Heart right ventricle (tissue), 16 donors: ENCODE measurements at regions of chr1 and their contacts with region 1.

Region 1: GRCh38 chr1:48817505-48818114 is 40.9 kb upstream of the BEND5 start:
- DNase-seq: peak; percentile 43 to 46
- ATAC-seq: peak in 6 of 8 donors; percentile 42 to 79 (median 62)
- H3K4me3 ChIP-seq: no peak overlapping the region
- H3K27ac ChIP-seq: no peak overlapping the region
- H3K4me1 ChIP-seq: no peaks in the 10 kb centered on the region
- H3K27me3 ChIP-seq: no peaks in the 10 kb centered on the region
- CTCF ChIP-seq: peak; percentile 27 to 82 (median 71)

Region 2: DNA sequence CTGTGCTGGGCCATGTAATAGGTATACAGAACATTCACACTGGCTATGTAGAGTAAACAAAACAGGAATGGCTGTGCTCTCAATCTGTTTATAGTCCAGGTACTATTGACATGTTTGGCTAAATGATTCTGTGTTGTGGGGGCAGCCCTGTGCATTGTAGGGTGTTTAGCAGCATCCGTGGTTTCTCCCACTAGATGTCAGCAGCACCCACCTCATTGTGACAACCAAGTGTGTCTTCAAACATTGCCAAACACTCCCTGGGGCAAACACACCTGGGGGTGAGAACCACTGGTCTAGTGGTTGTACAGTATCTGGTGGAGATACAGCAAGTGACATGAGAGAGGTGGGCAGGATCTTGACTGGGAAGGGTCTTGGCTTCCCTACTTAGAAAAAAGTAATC is 265.2 kb before region 1 on chr1:
- intact Hi-C with region 1: loop called in 1 of 10 experiments (anchors 10 kb)
- DNase-seq: no peak
- ATAC-seq: peak in 4 of 8 donors; percentile 30 to 44 (median 40)
- H3K4me3 ChIP-seq: no peak overlapping the region
- H3K27ac ChIP-seq: no peak overlapping the region
- H3K4me1 ChIP-seq: peaks cover 0 to 6% (median 0%) of the 10 kb centered on the region in 9 donors
- H3K27me3 ChIP-seq: no peaks in the 10 kb centered on the region
- CTCF ChIP-seq: peak in 6 of 9 donors; percentile 15 to 40 (median 32)

Region 3: GRCh38 chr1:48572646-48573261 is 244.9 kb before region 1 on chr1:
- intact Hi-C with region 1: loop called in 4 of 10 experiments (anchors 5 to 10 kb)
- DNase-seq: peak; percentile 14 to 28
- ATAC-seq: peak; percentile 33 to 83 (median 73)
- H3K4me3 ChIP-seq: no peak overlapping the region
- H3K27ac ChIP-seq: no peak overlapping the region
- H3K4me1 ChIP-seq: peaks cover 0 to 3% (median 0%) of the 10 kb centered on the region in 9 donors
- H3K27me3 ChIP-seq: peaks cover 0 to 18% (median 12%) of the 10 kb centered on the region in 7 donors
- CTCF ChIP-seq: peak in 8 of 9 donors; percentile 32 to 73 (median 59)

Region 4: DNA sequence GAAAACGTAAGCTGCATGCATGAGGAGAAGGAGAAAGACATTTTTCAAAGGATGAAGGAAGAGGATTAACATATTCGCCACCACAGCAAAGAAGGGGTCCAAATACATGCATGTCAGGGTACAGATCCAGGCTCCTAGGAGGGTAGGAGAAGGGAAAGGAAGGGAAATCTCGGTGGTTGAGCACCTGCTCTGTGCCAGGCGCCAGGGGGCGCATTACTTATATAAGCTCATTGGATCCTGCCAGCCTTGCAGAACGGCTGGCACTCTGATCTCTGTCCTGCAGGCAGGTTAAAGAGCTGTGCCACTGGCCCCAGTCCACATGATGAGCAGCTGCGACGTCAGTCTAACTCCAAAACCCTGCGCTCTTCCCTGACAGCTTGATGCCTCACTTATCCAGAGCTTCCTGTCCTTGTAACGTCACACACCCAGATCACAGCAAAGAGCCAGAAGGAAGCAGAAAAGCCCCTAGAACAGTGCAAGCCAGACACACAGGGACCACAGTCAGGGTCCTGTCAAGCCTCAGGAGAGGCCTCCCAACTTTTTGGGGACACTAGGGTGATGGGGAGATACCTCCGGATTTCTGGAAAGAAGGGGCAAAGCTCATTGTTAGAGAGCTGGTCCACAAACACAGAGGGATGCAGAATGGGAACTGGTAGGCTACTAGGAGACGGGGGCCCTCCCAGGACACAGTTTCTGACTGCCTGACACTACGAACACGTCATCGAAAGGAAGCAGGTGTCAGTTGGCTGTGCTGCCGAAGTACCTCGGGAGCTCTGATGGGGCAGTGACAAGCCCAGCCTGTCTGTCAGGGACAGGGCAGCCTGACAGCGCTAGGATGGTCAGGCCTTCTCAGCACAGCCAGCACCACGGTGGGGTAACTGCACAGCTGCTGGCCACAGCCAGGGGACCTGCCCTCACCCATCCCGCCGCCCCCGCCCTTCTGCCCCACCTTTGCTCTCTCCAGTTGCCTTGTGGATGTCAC is 140.0 kb before region 1 on chr1:
- intact Hi-C with region 1: loop called in 6 of 10 experiments (anchors 5 to 10 kb)
- DNase-seq: peak; percentile 34 to 64
- ATAC-seq: peak in 6 of 8 donors; percentile 58 to 73 (median 68)
- H3K4me3 ChIP-seq: no peak overlapping the region
- H3K27ac ChIP-seq: no peak overlapping the region
- H3K4me1 ChIP-seq: peaks cover 0 to 3% (median 0%) of the 10 kb centered on the region in 9 donors
- H3K27me3 ChIP-seq: peaks cover 0 to 39% (median 25%) of the 10 kb centered on the region in 7 donors
- CTCF ChIP-seq: peak in 8 of 9 donors; percentile 41 to 75 (median 68)

Region 5: GRCh38 chr1:48688102-48688760 is 129.4 kb before region 1 on chr1:
- intact Hi-C with region 1: loop called in 1 of 10 experiments (anchors 10 kb)
- DNase-seq: no peak
- ATAC-seq: no peak
- H3K4me3 ChIP-seq: no peak overlapping the region
- H3K27ac ChIP-seq: no peak overlapping the region
- H3K4me1 ChIP-seq: no peaks in the 10 kb centered on the region
- H3K27me3 ChIP-seq: peaks cover 0 to 32% (median 7%) of the 10 kb centered on the region in 7 donors
- CTCF ChIP-seq: no peak

Region 6: DNA sequence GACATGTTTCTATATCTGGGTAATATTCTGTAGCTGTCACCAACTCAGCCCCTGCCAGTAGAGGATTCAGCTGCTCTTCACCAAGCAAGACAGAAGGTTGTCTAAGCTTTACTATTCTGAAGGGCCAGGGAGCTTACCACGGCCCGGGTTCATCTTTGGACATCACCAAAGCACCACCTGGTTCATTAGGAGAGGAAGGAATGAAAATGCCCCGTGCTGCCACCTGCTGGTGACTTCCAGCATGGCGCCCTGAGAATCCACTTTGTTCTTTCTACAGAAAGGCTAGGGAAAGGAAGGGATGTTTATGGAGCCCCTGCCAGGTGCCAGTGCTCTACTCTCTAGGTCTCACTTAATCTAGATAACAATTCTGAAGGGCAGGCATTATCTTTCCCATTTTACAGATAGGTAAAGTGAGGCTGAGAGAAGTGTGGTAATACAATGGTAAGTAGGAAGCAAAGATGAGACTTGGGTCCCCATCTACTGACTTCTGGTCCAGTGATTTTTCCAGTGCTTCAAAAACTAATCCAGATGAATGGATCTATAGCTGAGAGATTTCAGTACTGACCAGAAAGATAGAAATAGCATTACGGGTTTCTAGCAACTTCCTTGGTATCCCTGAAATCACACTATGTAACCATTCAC is 120.4 kb before region 1 on chr1:
- intact Hi-C with region 1: loop called in 2 of 10 experiments (anchors 10 kb)
- DNase-seq: peak; percentile 29 to 58
- ATAC-seq: peak in 2 of 8 donors; percentile 36 to 52
- H3K4me3 ChIP-seq: no peak overlapping the region
- H3K27ac ChIP-seq: no peak overlapping the region
- H3K4me1 ChIP-seq: no peaks in the 10 kb centered on the region
- H3K27me3 ChIP-seq: peaks cover 0 to 61% (median 22%) of the 10 kb centered on the region in 7 donors
- CTCF ChIP-seq: peak; percentile 77 to 94 (median 90)